ENCODE measurements at regions of chr18 and their contacts with region 1.

Region 1: DNA sequence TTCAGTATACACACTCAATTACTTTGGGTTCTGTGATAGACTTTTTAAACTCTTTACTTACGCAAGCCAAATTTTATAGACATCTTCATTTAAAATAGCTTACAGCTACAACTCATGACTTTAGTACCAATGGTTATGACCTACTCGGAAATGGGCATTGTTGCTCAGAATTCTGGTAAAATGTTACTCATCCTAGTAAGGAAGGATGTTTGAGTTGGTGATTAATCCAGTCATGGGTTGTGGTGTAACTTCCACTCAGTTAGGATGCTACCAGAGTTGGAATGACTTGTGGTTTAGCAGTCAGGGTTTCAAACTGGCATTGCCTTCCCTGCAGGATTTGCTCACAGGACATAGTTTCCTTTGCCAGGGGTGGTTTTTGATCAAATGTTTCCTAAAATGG is 7.4 kb upstream of the NPC1 start:
- DNase-seq: no peak
- ATAC-seq: no peak
- H3K4me3 ChIP-seq: no peak overlapping the region
- H3K27ac ChIP-seq: peak overlapping the region in 1 of 10 donors; percentile 61
- H3K4me1 ChIP-seq: peaks cover 0 to 20% (median 0%) of the 10 kb centered on the region in 9 donors
- H3K27me3 ChIP-seq: peaks cover 0 to 12% (median 0%) of the 10 kb centered on the region in 7 donors
- CTCF ChIP-seq: no peak

Region 2: DNA sequence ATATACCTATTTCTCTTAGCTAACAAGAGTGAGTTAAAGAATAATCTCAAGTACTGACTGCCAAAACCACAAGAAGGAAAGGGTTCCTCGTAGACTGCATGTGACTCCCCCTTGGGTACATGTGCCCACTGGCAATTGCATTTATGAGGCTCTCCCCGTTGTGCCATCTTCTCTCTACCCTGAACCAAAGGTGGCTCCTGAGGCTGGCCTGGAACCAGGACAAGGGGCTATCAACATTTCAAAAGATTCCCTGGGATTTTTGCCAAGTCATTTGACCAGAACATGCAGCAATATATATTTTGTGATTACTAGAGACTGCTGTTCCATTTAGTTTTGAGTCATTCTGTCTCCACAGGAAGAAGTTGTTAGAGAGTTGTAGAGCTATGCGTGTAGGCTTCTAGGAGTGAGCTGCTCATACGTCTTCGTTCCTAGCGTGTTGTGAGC is 141.3 kb after region 1 on chr18:
- intact Hi-C with region 1: no loop called
- DNase-seq: no peak
- ATAC-seq: no peak
- H3K4me3 ChIP-seq: no peak overlapping the region
- H3K27ac ChIP-seq: no peak overlapping the region
- H3K4me1 ChIP-seq: peaks cover 0 to 25% (median 0%) of the 10 kb centered on the region in 9 donors
- H3K27me3 ChIP-seq: peaks cover 0 to 5% (median 0%) of the 10 kb centered on the region in 7 donors
- CTCF ChIP-seq: no peak

Region 3: GRCh38 chr18:24019641-24020331 is 426.1 kb after region 1 on chr18:
- intact Hi-C with region 1: loop called in 1 of 10 experiments (anchors 5 kb)
- DNase-seq: no peak
- ATAC-seq: no peak
- H3K4me3 ChIP-seq: no peak overlapping the region
- H3K27ac ChIP-seq: peak overlapping the region in 1 of 10 donors; percentile 22
- H3K4me1 ChIP-seq: peaks cover 0 to 86% (median 10%) of the 10 kb centered on the region in 9 donors
- H3K27me3 ChIP-seq: no peaks in the 10 kb centered on the region
- CTCF ChIP-seq: no peak

Measured in heart right ventricle (tissue), 16 donors.